HepG2 (cell line): ENCODE measurements at regions of chr4 and their contacts with region 1.

Region 1: DNA sequence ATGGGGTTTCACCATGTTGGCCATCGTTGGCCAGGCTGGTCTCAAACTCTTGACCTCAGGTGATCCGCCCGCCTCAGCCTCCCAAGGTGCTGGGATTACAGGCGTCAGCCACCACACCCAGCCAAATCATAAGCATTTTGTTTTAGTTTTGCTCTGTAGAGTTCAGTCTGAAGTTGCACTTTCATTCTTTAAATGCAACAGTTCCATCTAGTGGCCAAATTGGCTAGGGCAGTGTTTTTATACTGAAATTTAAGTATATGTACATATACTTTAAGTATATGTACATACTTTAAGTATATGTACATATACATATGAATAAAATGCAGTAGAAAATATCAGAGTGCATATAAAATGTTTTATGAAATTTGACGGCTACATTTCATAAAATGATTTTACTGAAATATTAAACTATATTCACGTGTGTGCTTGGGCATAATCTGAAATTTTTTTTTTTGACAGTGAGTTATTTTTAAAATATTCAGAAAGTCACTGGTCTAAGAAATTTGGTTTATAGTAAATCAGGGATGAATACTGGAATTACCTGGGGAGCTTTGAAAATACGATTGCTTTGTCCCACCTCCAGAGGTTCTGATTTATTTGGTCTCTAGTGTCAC is 145.5 kb downstream of the NWD2 start:
- DNase-seq: peak; percentile 48
- ATAC-seq: peak; percentile 84
- H3K4me3 ChIP-seq: no peak overlapping the region
- H3K27ac ChIP-seq: no peak overlapping the region
- H3K4me1 ChIP-seq: no peaks in the 10 kb centered on the region
- H3K27me3 ChIP-seq: no peaks in the 10 kb centered on the region
- CTCF ChIP-seq: peak; percentile 72
- EP300 ChIP-seq: no peak
- POLR2A ChIP-seq: no peak
- RAD21 ChIP-seq: 0 out of 2 replicates have a peak, but pooled peaks have one; percentile 44

Region 2: GRCh38 chr4:36351082-36351666 is 1038.9 kb before region 1 on chr4:
- CTCF ChIA-PET with region 1: interaction called, 15 read pairs
- POLR2A ChIA-PET with region 1: no interaction called
- in situ Hi-C with region 1: loop called (anchors 5 kb)
- intact Hi-C with region 1: loop called (anchors 1 kb)
- DNase-seq: peak; percentile 19
- ATAC-seq: peak; percentile 68
- H3K4me3 ChIP-seq: no peak overlapping the region
- H3K27ac ChIP-seq: no peak overlapping the region
- H3K4me1 ChIP-seq: no peaks in the 10 kb centered on the region
- H3K27me3 ChIP-seq: no peaks in the 10 kb centered on the region
- CTCF ChIP-seq: peak; percentile 62
- EP300 ChIP-seq: no peak
- POLR2A ChIP-seq: no peak
- RAD21 ChIP-seq: no peak

Region 3: DNA sequence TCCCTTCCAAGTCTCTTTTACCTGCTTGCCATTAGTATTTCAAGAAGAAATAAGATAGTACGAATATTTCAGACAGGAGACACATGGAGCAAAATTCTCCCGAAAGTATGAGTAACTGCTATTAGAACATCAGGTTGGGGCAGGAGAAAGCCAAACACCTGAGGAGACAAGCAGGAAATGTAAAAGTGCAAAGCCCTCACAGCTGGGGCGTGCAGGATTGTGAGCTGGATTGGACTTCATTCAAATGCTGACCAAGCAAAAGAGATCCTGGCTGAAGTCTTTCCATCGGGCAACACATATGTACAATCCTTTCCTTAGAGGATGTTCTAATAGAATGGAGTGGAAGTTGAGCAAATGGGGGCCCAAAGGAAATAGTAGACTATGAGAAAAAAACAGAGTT is 1031.9 kb before region 1 on chr4:
- CTCF ChIA-PET with region 1: no interaction called
- POLR2A ChIA-PET with region 1: no interaction called
- in situ Hi-C with region 1: loop called (anchors 5 kb)
- intact Hi-C with region 1: no loop called
- DNase-seq: no peak
- ATAC-seq: no peak
- H3K4me3 ChIP-seq: no peak overlapping the region
- H3K27ac ChIP-seq: no peak overlapping the region
- H3K4me1 ChIP-seq: no peaks in the 10 kb centered on the region
- H3K27me3 ChIP-seq: no peaks in the 10 kb centered on the region
- CTCF ChIP-seq: no peak
- EP300 ChIP-seq: no peak
- POLR2A ChIP-seq: no peak
- RAD21 ChIP-seq: no peak

Region 4: DNA sequence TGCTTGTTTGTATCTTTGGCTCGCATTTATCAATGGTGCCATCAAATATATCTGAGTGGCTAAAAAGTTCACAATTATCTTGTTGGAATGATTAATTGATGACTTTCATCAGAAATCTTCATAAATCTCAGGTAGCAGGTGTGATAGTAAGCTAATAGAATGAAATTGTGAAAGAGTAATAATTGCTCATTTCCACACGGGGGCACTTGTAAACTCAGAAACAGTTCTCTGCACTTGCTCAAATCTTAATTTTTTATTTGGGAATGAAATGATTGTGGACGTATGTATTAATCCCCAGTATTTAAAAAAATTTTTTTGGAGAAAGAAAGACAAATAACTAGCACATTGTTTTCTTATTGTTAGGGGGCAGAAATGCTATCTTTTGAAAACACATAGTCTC is 975.8 kb before region 1 on chr4:
- CTCF ChIA-PET with region 1: no interaction called
- POLR2A ChIA-PET with region 1: no interaction called
- in situ Hi-C with region 1: loop called (anchors 10 kb)
- intact Hi-C with region 1: loop called (anchors 2 kb)
- DNase-seq: no peak
- ATAC-seq: no peak
- H3K4me3 ChIP-seq: no peak overlapping the region
- H3K27ac ChIP-seq: no peak overlapping the region
- H3K4me1 ChIP-seq: no peaks in the 10 kb centered on the region
- H3K27me3 ChIP-seq: no peaks in the 10 kb centered on the region
- CTCF ChIP-seq: 0 out of 2 replicates have a peak, but pooled peaks have one; percentile 3
- EP300 ChIP-seq: no peak
- POLR2A ChIP-seq: no peak
- RAD21 ChIP-seq: no peak

Region 5: DNA sequence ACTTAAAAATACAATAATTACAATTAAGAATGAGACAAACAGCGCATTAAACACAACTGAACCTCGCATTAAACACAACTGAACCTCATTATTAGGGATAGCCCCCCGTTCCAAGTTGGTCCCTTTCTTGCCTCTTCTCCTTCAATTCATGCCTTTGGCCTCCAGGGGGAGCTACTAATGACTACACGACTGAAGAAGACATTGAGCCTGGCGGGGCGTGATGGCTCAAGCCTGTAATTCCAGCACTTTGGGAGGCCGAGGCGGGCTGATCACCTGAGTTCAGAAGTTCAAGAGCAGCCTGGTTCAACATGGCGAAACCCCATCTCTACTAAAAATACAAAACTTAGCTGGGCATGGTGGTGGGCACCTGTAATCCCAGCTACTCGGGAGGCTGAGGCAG is 202.0 kb before region 1 on chr4:
- CTCF ChIA-PET with region 1: no interaction called
- POLR2A ChIA-PET with region 1: no interaction called
- in situ Hi-C with region 1: loop called (anchors 10 kb)
- intact Hi-C with region 1: no loop called
- DNase-seq: peak; percentile 10
- ATAC-seq: peak; percentile 47; the same call in 1 of the 3 replicates
- H3K4me3 ChIP-seq: no peak overlapping the region
- H3K27ac ChIP-seq: no peak overlapping the region
- H3K4me1 ChIP-seq: no peaks in the 10 kb centered on the region
- H3K27me3 ChIP-seq: no peaks in the 10 kb centered on the region
- CTCF ChIP-seq: peak; percentile 62
- EP300 ChIP-seq: no peak
- POLR2A ChIP-seq: no peak
- RAD21 ChIP-seq: no peak

Region 6: GRCh38 chr4:37370052-37370451 is 20.0 kb before region 1 on chr4:
- CTCF ChIA-PET with region 1: no interaction called
- POLR2A ChIA-PET with region 1: no interaction called
- in situ Hi-C with region 1: no loop called
- intact Hi-C with region 1: no loop called
- DNase-seq: no peak
- ATAC-seq: no peak
- H3K4me3 ChIP-seq: no peak overlapping the region
- H3K27ac ChIP-seq: no peak overlapping the region
- H3K4me1 ChIP-seq: no peaks in the 10 kb centered on the region
- H3K27me3 ChIP-seq: no peaks in the 10 kb centered on the region
- CTCF ChIP-seq: no peak
- EP300 ChIP-seq: no peak
- POLR2A ChIP-seq: no peak
- RAD21 ChIP-seq: no peak

Region 7: DNA sequence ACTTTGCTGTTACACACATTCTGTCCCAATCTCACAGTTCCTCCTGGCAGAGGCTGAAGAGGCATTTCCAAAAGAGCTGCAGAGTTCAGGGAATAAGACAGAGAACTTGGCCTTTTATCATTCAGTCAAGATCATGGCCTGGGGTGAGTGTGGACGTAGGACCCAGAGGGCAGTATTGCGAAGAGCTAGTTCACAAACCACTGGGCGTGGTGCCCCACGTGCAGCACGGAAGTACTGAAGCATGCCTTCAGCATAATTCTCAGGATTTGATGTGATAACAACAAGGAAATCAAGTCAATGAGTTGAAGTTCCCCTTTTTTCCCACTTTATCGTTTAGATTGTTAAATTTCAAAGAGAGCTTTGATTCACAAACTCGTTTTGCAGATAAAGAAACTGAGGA is 178.4 kb after region 1 on chr4:
- CTCF ChIA-PET with region 1: no interaction called
- POLR2A ChIA-PET with region 1: no interaction called
- in situ Hi-C with region 1: no loop called
- intact Hi-C with region 1: loop called (anchors 5 kb)
- DNase-seq: no peak
- ATAC-seq: no peak
- H3K4me3 ChIP-seq: no peak overlapping the region
- H3K27ac ChIP-seq: no peak overlapping the region
- H3K4me1 ChIP-seq: peaks cover 17% of the 10 kb centered on the region
- H3K27me3 ChIP-seq: no peaks in the 10 kb centered on the region
- CTCF ChIP-seq: no peak
- EP300 ChIP-seq: no peak
- POLR2A ChIP-seq: no peak
- RAD21 ChIP-seq: no peak

Region 8: DNA sequence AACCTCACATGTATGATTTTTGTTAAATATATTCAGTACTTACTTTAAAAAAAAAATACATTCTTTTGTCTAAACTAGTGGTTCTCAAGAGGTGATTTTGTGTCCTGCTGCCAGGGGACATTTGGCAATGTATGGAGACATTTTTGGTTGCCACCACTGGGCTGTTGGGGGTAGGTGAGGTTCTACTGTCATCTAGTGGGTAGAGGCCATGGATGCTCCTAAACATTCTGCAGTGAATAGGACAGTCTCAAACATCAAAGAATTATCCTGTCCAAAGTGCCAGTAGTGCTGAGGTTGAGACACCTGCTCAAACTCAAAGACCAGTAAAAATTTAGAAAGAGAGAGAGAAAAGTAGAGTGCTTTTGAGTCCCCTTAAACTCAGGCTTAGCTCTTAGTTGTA is 403.5 kb after region 1 on chr4:
- CTCF ChIA-PET with region 1: no interaction called
- POLR2A ChIA-PET with region 1: no interaction called
- in situ Hi-C with region 1: no loop called
- intact Hi-C with region 1: loop called (anchors 2 kb)
- DNase-seq: peak; percentile 27
- ATAC-seq: peak; percentile 90
- H3K4me3 ChIP-seq: no peak overlapping the region
- H3K27ac ChIP-seq: no peak overlapping the region
- H3K4me1 ChIP-seq: peaks cover 10% of the 10 kb centered on the region; the same call in 1 of the 2 replicates
- H3K27me3 ChIP-seq: no peaks in the 10 kb centered on the region
- CTCF ChIP-seq: peak; percentile 71
- EP300 ChIP-seq: no peak
- POLR2A ChIP-seq: no peak
- RAD21 ChIP-seq: peak; percentile 60